PC-3 (cell line): ENCODE measurements at regions of chr7 and their contacts with region 1.

Region 1: GRCh38 chr7:24595671-24596418 is 22.6 kb downstream of the PALS2 start:
- DNase-seq: no peak
- ATAC-seq: no peak
- H3K4me3 ChIP-seq: no peak overlapping the region
- H3K27ac ChIP-seq: no peak overlapping the region
- H3K4me1 ChIP-seq: no peaks in the 10 kb centered on the region
- H3K27me3 ChIP-seq: no peaks in the 10 kb centered on the region
- CTCF ChIP-seq: no peak

Region 2: DNA sequence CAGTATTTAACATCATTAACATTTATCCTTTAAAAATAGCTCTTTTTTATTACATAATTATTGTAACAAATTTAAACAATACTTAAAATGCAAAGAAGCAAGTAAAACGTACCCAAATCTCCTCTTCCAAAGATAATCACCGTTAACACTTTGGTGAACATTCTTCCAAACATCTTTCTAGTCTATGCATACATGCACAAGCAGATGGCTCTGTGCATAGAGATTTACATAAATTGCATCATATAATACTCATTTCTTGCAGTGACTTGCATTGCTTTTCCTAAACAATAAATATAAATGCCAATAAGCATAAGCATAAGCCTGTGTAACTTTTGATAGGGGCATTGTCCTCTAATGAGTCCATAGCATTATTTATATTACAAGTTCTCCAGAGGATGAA is 112.0 kb before region 1 on chr7:
- CTCF ChIA-PET with region 1: no interaction called
- POLR2A ChIA-PET with region 1: no interaction called
- intact Hi-C with region 1: no loop called
- DNase-seq: no peak
- ATAC-seq: no peak
- H3K4me3 ChIP-seq: no peak overlapping the region
- H3K27ac ChIP-seq: no peak overlapping the region
- H3K4me1 ChIP-seq: peaks cover under 1% of the 10 kb centered on the region
- H3K27me3 ChIP-seq: peaks cover 44% of the 10 kb centered on the region
- CTCF ChIP-seq: no peak

Region 3: DNA sequence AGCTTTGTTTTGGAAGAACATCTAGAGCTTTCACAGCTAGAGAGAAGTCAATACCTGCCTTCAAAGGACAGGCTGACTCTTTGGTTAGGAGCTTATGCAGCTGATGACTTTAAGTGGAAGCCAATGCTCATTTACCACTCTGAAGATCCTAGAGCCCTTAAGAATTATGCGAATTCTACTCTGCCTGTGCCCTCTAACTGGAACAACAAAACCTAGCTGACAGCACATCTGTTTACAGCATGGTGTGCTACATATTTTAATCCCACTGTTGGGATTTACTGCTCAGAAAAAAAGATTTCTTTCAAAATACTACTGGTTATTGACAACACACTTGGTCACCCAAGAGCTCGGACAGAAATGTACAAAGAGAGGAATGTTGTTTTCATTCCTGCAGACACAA is 34.8 kb after region 1 on chr7:
- CTCF ChIA-PET with region 1: no interaction called
- POLR2A ChIA-PET with region 1: no interaction called
- intact Hi-C with region 1: loop called (anchors 5 kb)
- DNase-seq: no peak
- ATAC-seq: no peak
- H3K4me3 ChIP-seq: no peak overlapping the region
- H3K27ac ChIP-seq: no peak overlapping the region
- H3K4me1 ChIP-seq: no peaks in the 10 kb centered on the region
- H3K27me3 ChIP-seq: no peaks in the 10 kb centered on the region
- CTCF ChIP-seq: no peak